H1 (cell line): ENCODE measurements at regions of chr7 and their contacts with region 1.

Region 1: GRCh38 chr7:41711283-41712064 is 8.6 kb upstream of the INHBA start:
- DNase-seq: peak in 1 of 2 experiments; percentile 82
- H3K4me3 ChIP-seq: peak overlapping the region in 2 of 4 experiments; percentile 10 to 42; a peak in 4 of 8 replicates
- H3K27ac ChIP-seq: no peak overlapping the region
- H3K4me1 ChIP-seq: peaks cover 0 to 2% (median under 1%) of the 10 kb centered on the region in 4 experiments; a peak in 2 of 7 replicates
- H3K27me3 ChIP-seq: peaks cover 3 to 7% (median 6%) of the 10 kb centered on the region in 4 experiments; a peak in 6 of 7 replicates
- CTCF ChIP-seq: peak; percentile 69 to 79 (median 70)
- EP300 ChIP-seq: no peak
- POLR2A ChIP-seq: no peak
- RAD21 ChIP-seq: peak; percentile 74 to 75

Region 2: DNA sequence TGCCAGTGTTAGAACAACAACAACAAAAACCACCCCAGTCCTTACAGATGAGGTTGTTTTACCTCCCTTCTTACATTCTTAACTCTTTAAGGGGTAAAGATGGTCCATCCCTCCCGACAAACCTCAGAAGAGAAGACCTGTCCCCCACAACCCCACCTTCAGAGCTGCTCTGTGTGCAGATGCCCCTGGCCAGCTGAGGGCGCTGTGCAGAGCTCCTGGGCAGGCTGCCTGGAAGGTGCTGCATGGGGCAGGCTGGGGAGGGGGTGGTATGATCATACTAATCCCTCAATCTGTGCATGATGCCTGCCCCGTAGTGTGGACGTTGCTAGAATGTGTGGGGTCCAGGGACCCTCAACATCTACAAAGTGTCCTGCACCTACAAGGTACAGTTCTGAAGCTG is 395.7 kb before region 1 on chr7:
- CTCF ChIA-PET with region 1: interaction called, 10 read pairs
- POLR2A ChIA-PET with region 1: no interaction called
- DNase-seq: peak in 1 of 2 experiments; percentile 83
- H3K4me3 ChIP-seq: no peak overlapping the region
- H3K27ac ChIP-seq: no peak overlapping the region
- H3K4me1 ChIP-seq: peaks cover 0 to 5% (median 4%) of the 10 kb centered on the region in 4 experiments; a peak in 3 of 7 replicates
- H3K27me3 ChIP-seq: no peaks in the 10 kb centered on the region
- CTCF ChIP-seq: peak; percentile 80 to 92 (median 83)
- EP300 ChIP-seq: no peak
- POLR2A ChIP-seq: no peak
- RAD21 ChIP-seq: peak; percentile 73 to 80

Region 3: DNA sequence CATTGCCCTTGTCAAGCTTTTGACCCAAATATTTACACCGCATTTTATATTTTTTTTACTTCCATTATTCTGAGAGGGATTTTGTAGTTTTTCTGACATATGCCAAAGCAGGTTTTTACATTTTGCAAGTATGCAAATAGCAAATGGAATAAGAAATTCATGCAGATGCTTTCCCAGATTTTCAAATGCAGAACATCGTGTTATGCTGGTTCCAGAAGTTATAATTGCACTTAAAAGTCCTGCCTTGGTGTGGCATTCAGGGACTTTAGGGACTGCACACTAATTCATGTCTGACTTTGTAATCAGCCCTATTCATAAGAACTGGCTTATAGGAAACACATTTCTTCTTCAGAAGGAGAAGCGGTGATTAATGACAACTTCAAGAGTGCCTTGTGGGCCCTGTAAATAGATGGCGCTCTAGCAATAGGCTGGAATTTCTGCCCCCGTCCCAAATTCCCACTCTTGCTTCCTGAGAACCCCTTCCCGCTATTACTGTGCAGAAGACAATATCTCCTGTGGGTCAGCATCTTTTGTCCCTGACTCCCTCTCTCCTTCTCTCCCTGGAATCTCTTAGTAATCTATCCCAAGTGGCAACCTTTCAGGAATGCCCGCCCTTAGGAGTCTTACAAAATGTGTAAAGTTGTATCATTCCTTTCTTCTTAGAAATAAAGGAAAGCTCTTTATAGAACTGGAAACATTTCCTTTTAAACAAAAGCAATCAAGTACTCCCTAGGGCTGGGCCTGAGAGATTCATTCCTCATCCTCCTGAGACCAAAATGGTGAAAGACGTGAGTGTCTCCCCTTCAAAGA is 272.6 kb before region 1 on chr7:
- CTCF ChIA-PET with region 1: interaction called, 10 read pairs
- POLR2A ChIA-PET with region 1: no interaction called
- DNase-seq: no peak
- H3K4me3 ChIP-seq: no peak overlapping the region
- H3K27ac ChIP-seq: no peak overlapping the region
- H3K4me1 ChIP-seq: no peaks in the 10 kb centered on the region
- H3K27me3 ChIP-seq: no peaks in the 10 kb centered on the region
- CTCF ChIP-seq: peak in 2 of 3 experiments; percentile 16 to 22; a peak in 1 of 4 replicates
- EP300 ChIP-seq: no peak
- POLR2A ChIP-seq: no peak
- RAD21 ChIP-seq: peak; percentile 52 to 56

Region 4: DNA sequence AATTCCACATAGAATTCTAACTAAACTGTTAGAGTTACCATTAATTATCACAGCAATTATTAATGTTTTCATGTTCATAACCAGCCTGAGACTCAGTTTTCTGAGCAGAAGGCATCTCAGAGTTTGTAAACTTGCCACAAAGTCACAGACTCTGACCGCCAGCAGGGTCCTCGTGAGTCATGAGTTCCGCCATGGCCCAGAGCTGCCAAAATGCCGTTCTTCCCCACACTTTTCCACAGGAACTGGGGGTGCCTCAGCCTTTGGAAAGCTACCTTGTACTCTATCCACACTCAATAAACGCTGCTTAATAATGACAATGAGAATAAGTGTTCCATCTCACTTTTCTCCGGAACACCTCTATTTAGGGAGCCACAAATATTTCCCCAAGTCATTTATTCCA is 13.5 kb after region 1 on chr7:
- CTCF ChIA-PET with region 1: interaction called, 35 read pairs
- POLR2A ChIA-PET with region 1: no interaction called
- DNase-seq: no peak
- H3K4me3 ChIP-seq: no peak overlapping the region
- H3K27ac ChIP-seq: no peak overlapping the region
- H3K4me1 ChIP-seq: no peaks in the 10 kb centered on the region
- H3K27me3 ChIP-seq: peaks cover 0 to 3% (median 0%) of the 10 kb centered on the region in 4 experiments; a peak in 2 of 7 replicates
- CTCF ChIP-seq: no peak
- EP300 ChIP-seq: no peak
- POLR2A ChIP-seq: no peak
- RAD21 ChIP-seq: no peak

Region 5: GRCh38 chr7:41771762-41772161 is 60.3 kb after region 1 on chr7:
- CTCF ChIA-PET with region 1: no interaction called
- POLR2A ChIA-PET with region 1: no interaction called
- DNase-seq: peak in 1 of 2 experiments; percentile 55
- H3K4me3 ChIP-seq: no peak overlapping the region
- H3K27ac ChIP-seq: no peak overlapping the region
- H3K4me1 ChIP-seq: no peaks in the 10 kb centered on the region
- H3K27me3 ChIP-seq: no peaks in the 10 kb centered on the region
- CTCF ChIP-seq: peak; percentile 53 to 56 (median 53)
- EP300 ChIP-seq: no peak
- POLR2A ChIP-seq: no peak
- RAD21 ChIP-seq: peak; percentile 70 to 78